Right ventricle myocardium inferior (tissue), 1 donor: ENCODE measurements at regions of chr9 and their contacts with region 1.

Region 1: DNA sequence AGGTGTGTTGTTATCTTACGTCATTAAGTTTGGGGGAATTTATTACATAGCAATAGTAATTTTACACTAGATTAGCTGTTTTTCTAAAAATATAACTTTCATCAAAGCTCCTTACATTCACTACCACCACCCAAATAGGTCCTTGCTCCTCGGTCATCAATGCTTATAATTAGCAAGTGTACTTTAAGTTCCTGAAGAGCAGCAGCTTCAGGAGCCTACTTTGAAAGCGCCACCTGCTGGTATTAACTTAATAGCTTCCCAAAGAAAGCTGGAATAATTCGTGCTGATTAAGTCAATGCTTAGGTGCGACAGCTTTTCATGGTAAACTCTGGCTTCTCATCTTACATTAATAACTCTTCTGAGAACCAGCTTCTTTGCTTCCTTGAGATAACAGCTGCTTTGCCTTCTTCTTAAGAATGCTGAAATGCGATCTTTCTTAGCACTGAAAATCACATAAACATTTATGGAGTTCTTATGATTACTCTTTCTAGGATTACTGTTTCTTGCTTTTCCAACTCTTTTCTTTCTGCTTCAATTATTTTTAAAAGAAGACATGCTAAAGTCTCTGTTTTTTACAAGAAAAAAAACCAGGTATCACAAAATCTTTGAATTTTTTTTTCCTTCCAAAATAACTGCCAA is 10.0 kb upstream of the C5 start:
- DNase-seq: no peak
- ATAC-seq: no peak

Region 2: GRCh38 chr9:120755827-120756434 is 304.2 kb before region 1 on chr9:
- intact Hi-C with region 1: loop called (anchors 2 kb)
- DNase-seq: no peak
- ATAC-seq: peak; percentile 42

Region 3: DNA sequence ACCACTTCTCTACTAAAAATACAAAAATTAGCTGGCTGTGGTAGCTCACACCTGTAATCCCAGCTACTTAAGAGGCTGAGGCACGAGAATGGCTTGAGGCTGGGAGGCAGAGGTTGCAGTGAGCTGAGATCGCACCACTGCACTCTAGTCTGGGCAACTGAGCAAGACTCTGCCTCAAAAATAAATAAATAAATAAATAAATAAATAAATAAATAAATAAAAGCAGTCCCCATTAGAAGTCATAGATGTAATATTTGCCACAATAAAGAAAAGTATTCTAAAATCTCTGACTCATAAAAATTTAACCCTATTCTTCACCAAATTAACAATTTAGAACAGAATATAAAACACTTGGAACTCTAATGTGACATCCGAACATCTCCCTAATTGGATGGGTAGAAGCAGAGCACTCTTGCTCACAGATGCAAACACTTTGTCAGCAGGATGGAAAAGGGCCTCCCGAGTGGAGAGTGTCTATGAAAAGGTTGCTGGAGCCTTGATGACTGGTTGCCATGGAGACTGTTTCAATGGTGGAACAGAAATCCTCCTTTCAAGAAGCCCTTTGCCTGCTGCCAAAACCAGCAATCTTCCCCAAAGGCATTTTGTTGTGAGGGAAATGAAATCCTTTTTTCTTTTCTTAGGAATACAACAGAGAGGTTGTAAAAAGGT is 94.6 kb before region 1 on chr9:
- intact Hi-C with region 1: no loop called
- DNase-seq: no peak
- ATAC-seq: peak; percentile 66

Region 4: GRCh38 chr9:120985810-120986222 is 74.3 kb before region 1 on chr9:
- intact Hi-C with region 1: loop called (anchors 5 kb)
- DNase-seq: no peak
- ATAC-seq: no peak

Region 5: DNA sequence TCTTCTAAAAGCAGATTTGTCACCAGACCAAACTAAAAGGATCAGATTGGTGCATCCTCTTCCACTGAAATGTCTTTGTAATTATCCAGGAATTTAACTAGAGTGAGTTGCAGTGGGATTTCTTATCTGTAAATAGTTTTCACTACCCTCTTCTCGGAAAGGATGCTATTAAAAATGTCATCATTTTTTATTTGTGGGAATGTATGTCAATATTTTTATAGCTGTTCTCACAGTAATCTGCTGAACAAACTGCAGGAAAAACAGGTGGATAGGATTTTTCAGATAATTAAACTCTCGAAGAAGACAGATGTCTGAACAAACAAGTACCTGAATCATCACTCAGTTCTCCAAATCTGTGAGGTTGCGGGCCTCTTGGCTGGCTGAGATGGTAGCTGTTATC is 78.9 kb after region 1 on chr9:
- intact Hi-C with region 1: no loop called
- DNase-seq: no peak
- ATAC-seq: no peak

Region 6: DNA sequence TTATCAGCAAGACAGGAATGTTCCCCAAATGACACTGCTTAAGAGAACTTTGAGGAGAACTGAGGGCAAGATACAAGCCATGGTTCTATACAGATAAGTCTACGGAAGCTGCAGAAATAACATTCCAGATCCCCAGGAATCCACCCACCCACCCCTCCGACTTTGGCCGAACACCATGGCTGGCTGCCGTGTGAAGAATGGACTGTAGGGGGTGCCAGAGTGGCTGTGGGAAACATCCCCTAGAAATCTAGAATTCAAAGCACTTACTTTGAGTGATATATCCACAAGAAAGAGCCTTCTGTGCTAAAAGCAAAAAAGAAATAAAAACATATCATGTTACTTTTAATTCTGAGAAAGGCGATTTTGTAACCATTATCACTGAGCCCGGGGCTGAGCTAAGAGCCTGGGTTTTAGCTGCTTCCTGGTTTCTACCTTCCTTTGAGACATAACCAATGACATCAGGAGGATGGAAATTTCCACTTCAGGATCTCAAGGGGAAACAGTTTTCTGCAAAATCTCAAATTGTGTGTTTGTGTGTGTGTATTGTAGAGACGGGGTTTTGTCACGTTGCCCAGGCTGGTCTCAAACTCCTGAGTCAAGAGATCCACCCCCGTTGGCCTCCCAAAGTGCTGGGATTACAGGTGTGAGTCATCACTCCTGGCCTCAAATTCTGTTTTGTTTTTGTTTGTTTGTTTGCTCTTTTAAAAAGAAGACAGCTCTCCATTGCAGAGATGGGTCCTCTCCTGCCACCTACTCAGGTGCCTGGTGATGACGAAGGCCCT is 403.1 kb after region 1 on chr9:
- intact Hi-C with region 1: no loop called
- DNase-seq: no peak
- ATAC-seq: peak; percentile 49